ENCODE measurements at regions of chr11 and their contacts with region 1.

Region 1: GRCh38 chr11:46238967-46239800 is 38.3 kb upstream of the CREB3L1 start:
- DNase-seq: peak; percentile 85 to 91 (median 86)
- ATAC-seq: peak; percentile 86
- H3K4me3 ChIP-seq: no peak overlapping the region
- H3K4me1 ChIP-seq: peaks cover 17% of the 10 kb centered on the region
- CTCF ChIP-seq: peak; percentile 99

Region 2: GRCh38 chr11:46149342-46149741 is 89.8 kb before region 1 on chr11:
- intact Hi-C with region 1: no loop called
- DNase-seq: no peak
- ATAC-seq: no peak
- H3K4me3 ChIP-seq: no peak overlapping the region
- H3K4me1 ChIP-seq: no peaks in the 10 kb centered on the region
- CTCF ChIP-seq: no peak

Region 3: GRCh38 chr11:46176402-46176801 is 62.8 kb before region 1 on chr11:
- intact Hi-C with region 1: no loop called
- DNase-seq: peak in 1 of 3 donors; percentile 66
- ATAC-seq: peak; percentile 65
- H3K4me3 ChIP-seq: no peak overlapping the region
- H3K4me1 ChIP-seq: no peaks in the 10 kb centered on the region
- CTCF ChIP-seq: no peak

Region 4: GRCh38 chr11:46308631-46309419 is 69.6 kb after region 1 on chr11:
- intact Hi-C with region 1: loop called (anchors 2 to 5 kb)
- DNase-seq: peak; percentile 70 to 89 (median 83)
- ATAC-seq: peak; percentile 81
- H3K4me3 ChIP-seq: no peak overlapping the region
- H3K4me1 ChIP-seq: no peaks in the 10 kb centered on the region
- CTCF ChIP-seq: peak; percentile 64

Region 5: GRCh38 chr11:46529095-46529905 is 290.1 kb after region 1 on chr11:
- intact Hi-C with region 1: no loop called
- DNase-seq: peak in 2 of 3 donors; percentile 45 to 83
- ATAC-seq: peak; percentile 89
- H3K4me3 ChIP-seq: no peak overlapping the region
- H3K4me1 ChIP-seq: peaks cover 11% of the 10 kb centered on the region
- CTCF ChIP-seq: peak; percentile 86

Measured in mucosa of descending colon (tissue), 3 donors.